ENCODE measurements at regions of chrX and their contacts with region 1.

Region 1: DNA sequence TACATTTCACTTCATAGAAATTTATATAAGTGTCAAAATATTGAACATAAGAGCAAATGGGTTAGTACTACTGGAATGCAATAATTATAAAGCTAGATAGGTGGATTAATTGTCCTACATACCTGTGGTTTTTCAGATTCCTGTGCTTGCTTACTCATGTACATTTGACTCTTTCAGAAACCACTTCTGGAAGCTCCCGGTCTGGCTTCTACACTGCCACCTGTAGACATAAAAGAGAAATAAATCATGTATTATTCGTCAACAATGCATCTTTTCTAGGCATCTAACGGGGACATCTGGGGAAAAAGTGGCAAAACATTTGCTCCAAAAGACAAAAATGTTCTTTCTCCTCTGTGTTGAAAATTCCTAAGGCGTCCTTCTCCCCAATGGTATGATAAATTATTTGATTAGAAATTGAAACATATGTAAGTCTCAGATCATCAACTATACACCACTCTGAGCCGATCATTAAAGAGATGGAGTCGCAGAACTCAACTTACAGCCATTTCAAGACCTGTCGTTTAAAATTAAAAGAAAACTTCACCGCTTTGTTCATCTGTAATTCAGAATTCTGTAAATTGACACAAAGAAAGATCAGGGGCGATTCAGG is 648.7 kb upstream of the DIPK2B start:
- DNase-seq: no peak
- H3K4me3 Mint-ChIP-seq: peak overlapping the region; percentile 99
- H3K27ac Mint-ChIP-seq: peak overlapping the region; percentile 95
- H3K4me1 Mint-ChIP-seq: peaks cover 30% of the 10 kb centered on the region
- H3K27me3 Mint-ChIP-seq: no peaks in the 10 kb centered on the region

Region 2: GRCh38 chrX:45322382-45322781 is 527.0 kb before region 1 on chrX:
- intact Hi-C with region 1: loop called (anchors 10 kb)
- DNase-seq: no peak
- H3K4me3 Mint-ChIP-seq: no peak overlapping the region
- H3K27ac Mint-ChIP-seq: no peak overlapping the region
- H3K4me1 Mint-ChIP-seq: no peaks in the 10 kb centered on the region
- H3K27me3 Mint-ChIP-seq: no peaks in the 10 kb centered on the region

Region 3: DNA sequence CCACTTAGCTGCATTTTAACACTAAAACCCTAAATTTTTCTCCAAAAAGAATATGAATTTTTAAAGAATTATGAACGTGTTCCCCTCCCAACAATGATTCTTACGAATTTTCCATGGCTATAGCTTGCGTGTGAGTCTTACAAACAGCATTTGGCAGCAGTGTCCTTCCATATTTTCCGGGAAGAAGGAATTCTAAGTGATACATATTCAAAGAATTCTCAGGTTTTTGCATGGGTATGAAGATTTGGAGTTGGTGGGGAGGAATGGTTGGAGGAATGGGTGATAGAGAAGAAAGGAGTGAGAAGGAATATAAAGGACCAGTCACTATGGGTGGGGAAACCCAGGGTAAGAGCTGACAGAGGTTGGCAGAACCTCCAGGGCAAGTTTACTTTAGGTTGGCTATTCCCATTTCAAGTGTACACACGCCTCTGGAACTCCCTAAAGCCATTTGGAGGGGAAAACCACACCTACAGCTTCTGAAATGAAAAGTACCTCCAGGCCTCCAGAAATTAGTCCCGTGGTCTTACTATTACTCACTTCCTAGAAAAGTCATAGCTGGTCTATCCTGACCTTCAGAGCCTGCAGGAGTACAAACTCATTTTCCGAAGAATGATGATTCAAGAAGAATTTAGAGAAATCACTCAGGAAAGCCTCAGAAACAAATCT is 227.8 kb before region 1 on chrX:
- intact Hi-C with region 1: loop called (anchors 5 kb)
- DNase-seq: no peak
- H3K4me3 Mint-ChIP-seq: no peak overlapping the region
- H3K27ac Mint-ChIP-seq: peak overlapping the region; percentile 80
- H3K4me1 Mint-ChIP-seq: peaks cover 18% of the 10 kb centered on the region
- H3K27me3 Mint-ChIP-seq: no peaks in the 10 kb centered on the region

Region 4: DNA sequence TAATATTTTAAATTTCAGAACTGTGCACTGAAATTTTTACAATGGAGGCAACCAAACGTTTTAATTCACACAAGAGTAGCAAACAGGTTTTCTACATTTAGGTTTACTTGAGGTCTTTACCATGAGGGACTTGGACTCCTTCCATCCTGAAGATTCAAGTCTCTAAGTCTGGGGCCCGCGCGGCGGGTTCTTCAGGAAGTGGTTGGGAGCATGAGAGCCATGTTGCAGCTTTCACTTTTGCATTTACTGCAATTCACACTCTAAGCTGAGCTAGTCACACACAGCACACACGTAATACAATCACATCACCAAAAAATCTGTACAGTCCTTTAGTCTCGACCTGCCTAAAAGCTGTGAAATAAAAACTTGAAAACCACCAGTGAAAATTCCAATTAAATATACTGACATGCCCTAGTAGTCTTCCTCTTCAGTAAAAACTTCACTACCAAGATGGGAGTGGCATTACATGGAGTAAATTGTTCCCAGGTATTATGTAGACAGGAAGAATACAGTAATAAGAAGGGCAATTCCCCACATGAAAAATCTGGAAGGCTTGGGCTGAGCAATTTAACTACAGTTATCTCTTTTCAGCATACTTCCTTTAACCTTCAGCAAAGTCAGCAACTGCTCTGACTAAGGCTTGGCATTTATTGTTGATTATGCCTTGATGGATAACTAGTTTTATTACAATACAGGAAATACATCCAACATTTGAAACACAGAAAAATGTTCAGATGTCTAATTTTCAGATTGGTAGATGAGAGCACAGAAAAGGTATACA is 77.6 kb before region 1 on chrX:
- intact Hi-C with region 1: loop called (anchors 2 kb)
- DNase-seq: peak; percentile 53
- H3K4me3 Mint-ChIP-seq: peak overlapping the region; percentile 80
- H3K27ac Mint-ChIP-seq: peak overlapping the region; percentile 94
- H3K4me1 Mint-ChIP-seq: peaks cover 60% of the 10 kb centered on the region
- H3K27me3 Mint-ChIP-seq: no peaks in the 10 kb centered on the region

Region 5: DNA sequence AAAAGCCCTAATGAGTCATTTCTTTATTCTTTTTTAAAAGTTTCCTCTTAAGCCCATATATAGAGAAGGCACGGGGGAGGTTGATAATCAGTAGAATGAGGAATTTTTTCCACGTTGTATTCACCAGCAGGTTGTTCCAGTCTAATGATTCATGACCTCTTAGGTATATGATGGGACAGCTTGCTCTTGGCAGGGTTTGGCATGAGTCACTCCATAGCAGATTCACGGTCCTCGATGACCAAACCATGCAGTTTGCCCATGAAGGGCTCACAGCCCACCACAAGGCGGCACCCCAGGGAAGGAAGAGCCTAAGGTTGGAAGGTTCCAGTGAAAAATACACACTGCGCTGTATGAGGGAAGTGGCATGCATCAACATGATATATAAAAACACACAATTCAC is 24.9 kb before region 1 on chrX:
- intact Hi-C with region 1: loop called (anchors 1 kb)
- DNase-seq: no peak
- H3K4me3 Mint-ChIP-seq: no peak overlapping the region
- H3K27ac Mint-ChIP-seq: peak overlapping the region; percentile 88
- H3K4me1 Mint-ChIP-seq: peaks cover 26% of the 10 kb centered on the region
- H3K27me3 Mint-ChIP-seq: no peaks in the 10 kb centered on the region

Region 6: DNA sequence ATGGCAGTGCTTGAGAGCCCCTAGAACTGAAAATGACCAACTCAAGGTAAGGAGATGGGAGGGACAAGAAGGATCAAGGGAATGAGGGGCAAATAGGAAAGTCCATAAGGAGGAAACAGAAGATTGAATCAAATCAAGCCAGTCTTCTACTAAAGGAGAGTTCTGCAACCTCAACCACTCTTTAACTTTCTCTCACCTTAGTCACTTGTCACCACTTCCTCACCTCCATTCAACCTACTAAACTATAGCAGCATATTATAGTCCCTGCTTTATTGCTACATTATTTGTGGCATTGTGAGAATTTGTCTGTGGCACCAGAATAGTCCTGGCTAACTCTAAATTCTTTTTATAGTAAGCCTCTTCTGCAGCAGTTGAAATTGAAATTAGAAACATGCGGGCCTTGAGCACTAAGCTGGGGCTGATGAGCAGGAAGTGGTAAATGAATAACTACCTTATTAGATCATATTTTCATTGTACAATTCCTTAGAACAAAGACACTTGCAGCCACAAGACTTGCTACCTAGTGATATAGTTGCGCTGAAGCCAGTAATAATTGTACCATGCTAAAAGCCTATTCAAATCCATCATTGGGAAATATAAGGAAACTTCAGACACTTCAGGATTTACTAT is 359.0 kb after region 1 on chrX:
- intact Hi-C with region 1: loop called (anchors 10 kb)
- DNase-seq: no peak
- H3K4me3 Mint-ChIP-seq: no peak overlapping the region
- H3K27ac Mint-ChIP-seq: no peak overlapping the region
- H3K4me1 Mint-ChIP-seq: peaks cover 27% of the 10 kb centered on the region
- H3K27me3 Mint-ChIP-seq: no peaks in the 10 kb centered on the region

Region 7: DNA sequence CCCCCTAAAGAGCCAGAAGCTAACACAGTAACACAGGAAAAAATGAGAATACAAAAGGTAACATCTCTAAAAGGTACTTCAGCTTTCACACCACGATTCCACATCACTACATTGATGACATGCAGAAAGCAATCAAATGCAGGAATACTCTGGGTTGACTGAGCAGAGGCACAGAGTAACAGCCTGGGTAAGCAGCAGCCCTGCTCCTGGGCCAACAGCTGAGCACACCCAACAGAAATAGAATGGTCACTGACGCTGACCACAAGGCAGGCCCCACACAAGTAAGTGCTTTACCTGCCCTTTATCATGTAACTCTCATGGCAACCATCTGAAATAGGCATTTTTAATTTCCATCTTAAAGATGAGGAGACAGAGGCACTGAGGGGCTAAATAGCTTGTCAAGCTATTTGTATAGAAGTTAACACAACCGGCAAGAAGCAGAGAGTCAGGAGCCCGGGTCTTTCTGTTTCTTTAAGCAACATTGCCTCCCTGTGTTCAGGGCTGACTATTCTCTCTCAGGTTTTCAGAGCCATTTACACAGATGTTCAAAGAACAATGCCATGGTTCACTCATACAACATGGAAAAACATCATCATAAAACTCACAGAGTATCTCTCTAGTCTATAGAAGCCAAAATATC is 527.0 kb after region 1 on chrX:
- intact Hi-C with region 1: loop called (anchors 1 kb)
- DNase-seq: no peak
- H3K4me3 Mint-ChIP-seq: no peak overlapping the region
- H3K27ac Mint-ChIP-seq: no peak overlapping the region
- H3K4me1 Mint-ChIP-seq: peaks cover 10% of the 10 kb centered on the region
- H3K27me3 Mint-ChIP-seq: peaks cover 5% of the 10 kb centered on the region

Measured in activated T-helper 2 cell treated with anti-CD3 and anti-CD28 coated beads, Interferon-gamma antibody, Interleukin-2, Interleukin-4, amounts not matched to agents 10 μg/mL and 5 μg/mL and 100 μg/mL, durations not matched to agents 14 hours and 24 hours and 36 hours (primary cell).